ENCODE measurements at regions of chr1 and their contacts with region 1.

Region 1: GRCh38 chr1:237799762-237800474 is 90.8 kb downstream of the ZP4 start:
- H3K4me3 ChIP-seq: no peak overlapping the region
- H3K27ac ChIP-seq: no peak overlapping the region
- H3K4me1 ChIP-seq: no peaks in the 10 kb centered on the region
- CTCF ChIP-seq: peak; percentile 50; the same call in 1 of the 2 replicates

Region 2: DNA sequence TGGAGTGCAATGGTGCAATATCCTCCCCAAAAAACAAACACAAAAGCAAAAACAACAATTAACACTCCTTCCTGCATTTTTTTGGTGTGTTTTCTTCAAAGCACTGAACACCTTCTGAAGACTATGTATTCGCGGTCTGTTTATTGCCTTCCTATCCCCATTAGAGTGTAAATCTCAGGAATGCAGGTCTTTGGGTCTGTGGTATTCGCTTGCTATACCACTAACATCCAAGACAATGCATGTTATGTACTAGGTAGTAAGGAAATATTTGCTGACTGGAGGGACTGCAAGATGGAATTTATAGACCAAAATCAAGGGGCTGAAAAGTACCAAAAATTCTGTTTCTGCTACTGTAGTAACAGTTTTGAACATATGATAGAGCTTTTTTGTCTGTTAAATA is 458.5 kb before region 1 on chr1:
- CTCF ChIA-PET with region 1: no interaction called
- POLR2A ChIA-PET with region 1: no interaction called
- H3K4me3 ChIP-seq: no peak overlapping the region
- H3K27ac ChIP-seq: no peak overlapping the region
- H3K4me1 ChIP-seq: no peaks in the 10 kb centered on the region
- CTCF ChIP-seq: no peak

Region 3: GRCh38 chr1:237562242-237562823 is 237.6 kb before region 1 on chr1:
- CTCF ChIA-PET with region 1: interaction called, 10 read pairs
- POLR2A ChIA-PET with region 1: no interaction called
- H3K4me3 ChIP-seq: no peak overlapping the region
- H3K27ac ChIP-seq: no peak overlapping the region
- H3K4me1 ChIP-seq: no peaks in the 10 kb centered on the region
- CTCF ChIP-seq: peak; percentile 68; the same call in 1 of the 2 replicates

Region 4: GRCh38 chr1:237677979-237678378 is 121.9 kb before region 1 on chr1:
- CTCF ChIA-PET with region 1: interaction called, 136 read pairs
- POLR2A ChIA-PET with region 1: no interaction called
- H3K4me3 ChIP-seq: no peak overlapping the region
- H3K27ac ChIP-seq: no peak overlapping the region
- H3K4me1 ChIP-seq: no peaks in the 10 kb centered on the region
- CTCF ChIP-seq: peak; percentile 73

Region 5: DNA sequence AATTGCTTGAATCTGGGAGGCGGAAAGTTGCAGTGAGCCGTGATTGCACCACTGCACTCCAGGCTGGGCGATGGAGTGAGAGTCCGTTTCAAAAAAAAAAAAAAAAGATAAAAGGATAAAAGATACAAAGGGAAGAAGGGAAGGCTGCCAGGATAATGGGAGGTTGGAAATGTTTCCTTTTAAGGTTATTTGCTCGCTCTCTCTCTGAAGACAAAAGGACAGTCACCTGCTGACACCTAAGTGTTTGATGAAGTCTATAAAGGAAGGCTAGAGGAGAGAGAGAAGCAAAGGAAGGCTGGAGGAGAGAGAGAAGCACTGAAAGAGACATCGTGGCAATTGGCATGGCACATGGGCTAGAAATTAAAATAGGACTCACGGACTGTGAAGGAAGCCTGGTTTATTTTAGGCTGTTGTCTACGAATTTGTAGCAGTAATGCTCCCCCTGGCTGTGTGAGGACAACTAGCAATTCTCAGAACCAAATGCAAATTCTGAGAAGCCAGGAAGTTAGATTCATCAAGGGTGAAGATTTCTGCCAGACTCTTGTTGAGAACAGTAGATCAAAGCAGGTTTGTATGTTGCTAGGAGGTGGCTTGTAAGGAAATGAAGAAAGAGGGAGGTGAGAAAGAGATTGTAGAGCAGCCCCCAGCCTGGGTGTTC is 63.4 kb before region 1 on chr1:
- CTCF ChIA-PET with region 1: interaction called, 12 read pairs
- POLR2A ChIA-PET with region 1: no interaction called
- H3K4me3 ChIP-seq: no peak overlapping the region
- H3K27ac ChIP-seq: no peak overlapping the region
- H3K4me1 ChIP-seq: no peaks in the 10 kb centered on the region
- CTCF ChIP-seq: peak; percentile 66

Region 6: GRCh38 chr1:237748171-237748960 is 51.6 kb before region 1 on chr1:
- CTCF ChIA-PET with region 1: no interaction called
- POLR2A ChIA-PET with region 1: no interaction called
- H3K4me3 ChIP-seq: no peak overlapping the region
- H3K27ac ChIP-seq: no peak overlapping the region
- H3K4me1 ChIP-seq: peaks cover 10% of the 10 kb centered on the region
- CTCF ChIP-seq: no peak

Region 7: GRCh38 chr1:237789619-237790018 is 10.3 kb before region 1 on chr1:
- CTCF ChIA-PET with region 1: interaction called, 12 read pairs
- POLR2A ChIA-PET with region 1: no interaction called
- H3K4me3 ChIP-seq: no peak overlapping the region
- H3K27ac ChIP-seq: no peak overlapping the region
- H3K4me1 ChIP-seq: peaks cover 2% of the 10 kb centered on the region; the same call in 1 of the 2 replicates
- CTCF ChIP-seq: no peak

Region 8: GRCh38 chr1:237814319-237814924 is 14.5 kb after region 1 on chr1:
- CTCF ChIA-PET with region 1: interaction called, 12 read pairs
- POLR2A ChIA-PET with region 1: no interaction called
- H3K4me3 ChIP-seq: no peak overlapping the region
- H3K27ac ChIP-seq: no peak overlapping the region
- H3K4me1 ChIP-seq: no peaks in the 10 kb centered on the region
- CTCF ChIP-seq: 0 out of 2 replicates have a peak, but pooled peaks have one; percentile 13

Measured in HEK293 (cell line).